AG04449 (cell line): ENCODE measurements at regions of chr15 and their contacts with region 1.

Region 1: DNA sequence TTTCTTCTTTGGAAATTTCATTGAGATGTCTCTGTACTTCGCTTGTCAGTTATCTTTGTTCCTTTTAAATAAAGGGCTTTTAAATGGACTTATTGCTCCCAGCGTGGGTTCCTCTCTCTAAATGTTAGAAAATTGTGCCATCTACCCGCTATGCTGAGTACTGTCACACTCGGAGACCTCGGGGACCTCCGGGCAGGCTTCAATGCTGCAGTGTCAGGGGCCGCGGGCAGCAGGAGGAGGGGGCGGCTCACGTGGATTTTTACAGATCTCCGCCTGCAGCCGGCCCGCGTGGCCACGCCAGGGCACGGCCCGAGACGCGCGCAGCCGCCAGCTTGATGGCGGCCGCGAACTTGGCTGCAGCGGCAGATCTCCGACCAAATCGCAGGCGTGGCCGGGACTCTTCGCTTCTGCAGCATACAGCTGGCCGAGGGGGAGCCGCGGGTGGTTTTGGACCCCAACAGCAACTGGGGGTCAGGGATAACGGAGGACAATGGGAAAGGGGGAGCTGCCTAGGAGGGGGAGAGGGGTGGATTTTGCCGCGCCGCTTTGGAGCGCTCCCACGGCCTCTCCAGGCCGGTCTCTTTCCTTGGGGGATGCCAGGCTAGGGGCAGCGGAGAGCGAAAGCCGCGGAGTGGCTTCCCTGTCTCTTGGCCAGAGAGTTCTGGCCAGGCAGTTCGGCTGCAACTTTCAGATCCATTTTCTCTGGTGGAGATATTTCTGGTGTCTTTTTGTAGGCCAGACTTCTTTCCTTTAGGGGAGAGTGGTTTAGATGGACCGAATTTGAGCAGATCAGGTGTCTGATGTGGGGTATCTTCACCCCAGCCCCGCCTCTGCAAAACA is 15.3 kb downstream of the NR2F2 start:
- DNase-seq: no peak
- H3K4me3 ChIP-seq: peak overlapping the region; percentile 36
- CTCF ChIP-seq: peak; percentile 64

Region 2: GRCh38 chr15:96320703-96321638 is 24.8 kb before region 1 on chr15:
- CTCF ChIA-PET with region 1: no interaction called
- POLR2A ChIA-PET with region 1: no interaction called
- DNase-seq: no peak
- H3K4me3 ChIP-seq: peak overlapping the region; percentile 34
- CTCF ChIP-seq: no peak

Region 3: DNA sequence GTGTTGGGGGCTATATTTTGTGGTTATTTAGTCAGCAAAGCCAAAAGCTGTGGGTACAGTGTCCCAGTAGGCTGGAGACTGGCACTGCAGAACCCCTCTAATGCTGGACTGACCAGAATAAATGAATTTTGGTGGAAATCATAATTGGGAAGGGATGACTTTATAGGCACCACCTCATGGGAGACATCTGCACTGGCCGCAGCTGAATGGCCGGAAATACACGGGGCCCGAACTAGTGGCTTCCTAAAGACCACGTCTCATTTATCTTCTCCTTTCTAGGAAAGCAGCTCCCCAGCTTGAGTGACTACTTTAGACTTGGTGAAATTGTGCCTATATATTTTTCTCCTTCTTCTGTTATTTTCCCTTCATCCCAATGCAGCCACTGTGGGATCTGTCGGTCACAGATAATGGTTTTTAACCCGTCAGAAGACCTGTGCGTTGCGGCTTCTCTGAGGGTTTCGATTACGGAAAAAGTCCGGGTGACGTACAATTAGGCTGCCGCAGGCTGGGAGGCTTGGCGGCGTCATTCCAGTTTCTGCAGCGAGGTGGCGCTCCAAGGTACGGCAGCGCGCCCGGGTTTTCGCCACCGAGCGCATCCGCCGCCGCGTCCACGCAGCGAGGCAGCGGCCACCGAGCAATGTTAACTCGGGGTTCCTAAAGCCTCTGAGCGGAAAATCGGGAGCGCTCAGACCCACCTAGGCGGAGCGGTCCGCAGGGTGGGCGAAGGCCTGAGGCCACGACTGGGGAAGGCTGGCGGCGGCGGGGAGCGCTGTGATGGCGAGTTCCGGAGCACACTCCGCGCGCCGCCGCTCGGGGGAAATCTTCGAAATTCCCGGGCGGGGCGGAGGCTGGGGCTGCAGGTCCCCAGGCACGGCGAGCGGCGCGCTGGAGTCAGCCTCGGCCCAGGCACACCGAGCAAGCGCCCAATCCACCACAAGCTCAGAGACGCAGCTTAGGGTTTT is 11.0 kb after region 1 on chr15:
- CTCF ChIA-PET with region 1: interaction called, 127 read pairs
- POLR2A ChIA-PET with region 1: no interaction called
- DNase-seq: no peak
- H3K4me3 ChIP-seq: peak overlapping the region; percentile 78
- CTCF ChIP-seq: peak; percentile 95